ENCODE measurements at regions of chr1 and their contacts with region 1.

Region 1: DNA sequence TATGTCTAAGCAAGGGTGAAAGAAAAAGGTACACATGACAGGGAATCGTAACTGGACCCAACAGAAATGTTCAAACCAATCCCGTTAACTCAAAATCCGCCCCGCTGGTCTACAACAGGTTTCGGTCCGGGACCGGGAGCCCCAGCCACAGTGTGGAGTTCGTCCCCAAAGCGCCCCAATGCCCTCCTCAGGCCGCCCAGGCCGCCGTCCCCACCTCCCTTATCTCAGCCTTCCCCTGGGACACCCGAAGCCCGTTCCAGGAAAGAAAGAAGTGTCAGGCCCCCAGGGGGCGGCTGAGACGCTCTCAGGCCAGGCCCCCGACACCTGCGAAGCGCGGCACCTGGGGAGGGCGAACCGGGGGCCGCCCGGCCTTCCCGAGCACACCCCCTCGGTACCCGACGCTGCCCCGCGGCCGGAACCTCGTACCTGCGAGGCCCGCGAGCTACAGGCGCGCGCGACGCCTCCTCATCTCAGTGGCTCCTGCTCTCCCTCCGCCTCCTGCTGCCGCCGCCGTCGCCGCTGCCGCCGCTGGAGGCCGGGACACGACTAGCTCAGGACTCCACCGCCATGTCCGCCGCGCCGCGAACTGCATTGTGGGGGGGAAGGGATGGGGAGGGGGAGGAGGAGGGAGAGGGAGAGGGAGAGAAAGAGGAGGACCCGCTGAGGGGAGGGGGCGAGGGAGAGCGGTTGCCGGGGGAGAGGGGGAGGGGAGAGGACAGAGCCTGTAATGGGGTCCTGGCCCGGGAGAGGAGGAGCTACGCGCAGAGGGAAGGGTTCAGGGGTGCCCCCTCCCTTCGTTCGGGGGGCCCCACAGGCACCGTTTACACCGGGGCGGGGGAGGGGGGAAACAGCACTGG is at the start of gene TUT4:
- DNase-seq: peak; percentile 24 to 83
- ATAC-seq: peak; percentile 80 to 83
- H3K4me3 ChIP-seq: peak within 1 kb of the TSS; percentile 77
- H3K27ac ChIP-seq: peak within 1 kb of the TSS; percentile 95 to 97
- H3K4me1 ChIP-seq: peaks cover 48% of the 10 kb centered on the region; the same call in 2 of the 3 replicates
- CTCF ChIP-seq: no peak
- EP300 ChIP-seq: no peak
- POLR2A ChIP-seq: peak; percentile 47; the same call in 1 of the 2 replicates
- RAD21 ChIP-seq: no peak
- polyA plus RNA-seq, gene TUT4: 32.2 and 34.1 TPM in 2 replicates

Region 2: GRCh38 chr1:52404116-52404986 is 148.4 kb before region 1 on chr1 and contains the starts of genes ORC1 and PRPF38A:
- CTCF ChIA-PET with region 1: no interaction called
- POLR2A ChIA-PET with region 1: interaction called, 10 read pairs
- DNase-seq: peak; percentile 85 to 95
- ATAC-seq: peak; percentile 93 to 96
- H3K4me3 ChIP-seq: peak within 1 kb of the TSS; percentile 93
- H3K27ac ChIP-seq: peak within 1 kb of the TSS; percentile 93 to 94
- H3K4me1 ChIP-seq: peaks cover 21% of the 10 kb centered on the region; the same call in 2 of the 3 replicates
- CTCF ChIP-seq: no peak
- EP300 ChIP-seq: no peak
- POLR2A ChIP-seq: peak; percentile 48
- RAD21 ChIP-seq: no peak
- polyA plus RNA-seq, gene ORC1: 17.7 and 19.1 TPM in 2 replicates
- polyA plus RNA-seq, gene PRPF38A: 24.0 and 30.4 TPM in 2 replicates

Region 3: DNA sequence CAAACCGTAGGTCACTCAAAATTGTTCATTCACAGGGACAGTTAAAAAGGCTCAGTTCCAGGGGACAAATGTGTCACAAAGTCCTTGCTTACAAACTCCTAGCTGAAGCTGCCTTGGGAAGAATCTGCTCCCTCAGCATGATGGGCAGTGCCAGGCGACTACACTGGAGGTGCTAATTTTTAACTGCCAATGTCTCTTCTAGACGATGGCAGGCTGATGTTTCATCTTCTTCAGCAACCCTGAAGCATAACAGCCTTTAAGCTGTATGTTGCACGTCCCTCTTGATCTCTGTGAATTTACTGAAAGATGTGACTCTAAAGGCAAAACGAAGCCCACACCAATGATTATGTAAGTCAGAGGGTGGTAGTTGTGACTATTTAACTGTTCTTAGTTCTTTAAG is 134.1 kb after region 1 on chr1:
- CTCF ChIA-PET with region 1: interaction called, 5 read pairs
- POLR2A ChIA-PET with region 1: interaction called, 12 read pairs
- DNase-seq: no peak
- ATAC-seq: peak in 1 of 2 experiments; percentile 56; a peak in 2 of 6 replicates
- H3K4me3 ChIP-seq: no peak overlapping the region
- H3K27ac ChIP-seq: no peak overlapping the region
- H3K4me1 ChIP-seq: no peaks in the 10 kb centered on the region
- CTCF ChIP-seq: no peak
- EP300 ChIP-seq: no peak
- POLR2A ChIP-seq: no peak
- RAD21 ChIP-seq: no peak

Region 4: DNA sequence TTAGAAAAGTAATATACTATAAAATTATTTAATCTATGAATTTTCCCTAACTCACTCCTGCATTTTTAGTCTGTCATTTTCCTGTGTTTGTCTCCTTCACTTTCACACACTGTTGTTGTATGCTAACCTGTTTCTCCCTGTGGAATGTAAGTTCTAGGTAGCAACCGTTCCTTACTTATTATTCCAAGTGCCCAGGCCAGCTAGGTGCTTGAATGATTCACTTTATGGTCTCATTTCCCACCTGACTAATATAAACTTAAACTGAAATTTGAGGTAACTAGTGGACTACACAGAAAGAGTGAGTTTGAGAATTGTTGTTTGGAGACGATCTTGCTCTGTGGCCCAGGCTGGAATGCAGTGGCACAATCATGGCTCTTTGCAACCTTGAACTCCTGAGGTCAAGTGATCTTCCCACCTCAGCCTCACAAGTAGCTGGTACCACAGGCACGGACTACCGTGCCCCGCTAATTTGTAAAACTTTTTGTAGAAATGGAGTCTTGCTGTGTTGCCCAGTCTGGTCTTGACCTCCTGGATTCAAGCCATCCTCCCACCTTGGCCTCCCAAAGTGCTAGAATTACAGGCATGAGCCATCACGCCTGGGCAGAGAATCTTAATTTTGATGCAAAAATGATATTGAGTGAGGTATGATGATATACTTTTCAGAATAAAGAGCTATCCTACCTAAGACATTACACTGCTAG is 175.4 kb after region 1 on chr1:
- CTCF ChIA-PET with region 1: no interaction called
- POLR2A ChIA-PET with region 1: no interaction called
- DNase-seq: no peak
- ATAC-seq: no peak
- H3K4me3 ChIP-seq: no peak overlapping the region
- H3K27ac ChIP-seq: no peak overlapping the region
- H3K4me1 ChIP-seq: peaks cover 17% of the 10 kb centered on the region; the same call in 2 of the 3 replicates
- CTCF ChIP-seq: no peak
- EP300 ChIP-seq: no peak
- POLR2A ChIP-seq: no peak
- RAD21 ChIP-seq: no peak